HCT116 (cell line): ENCODE measurements at regions of chr1 and their contacts with region 1.

Region 1: DNA sequence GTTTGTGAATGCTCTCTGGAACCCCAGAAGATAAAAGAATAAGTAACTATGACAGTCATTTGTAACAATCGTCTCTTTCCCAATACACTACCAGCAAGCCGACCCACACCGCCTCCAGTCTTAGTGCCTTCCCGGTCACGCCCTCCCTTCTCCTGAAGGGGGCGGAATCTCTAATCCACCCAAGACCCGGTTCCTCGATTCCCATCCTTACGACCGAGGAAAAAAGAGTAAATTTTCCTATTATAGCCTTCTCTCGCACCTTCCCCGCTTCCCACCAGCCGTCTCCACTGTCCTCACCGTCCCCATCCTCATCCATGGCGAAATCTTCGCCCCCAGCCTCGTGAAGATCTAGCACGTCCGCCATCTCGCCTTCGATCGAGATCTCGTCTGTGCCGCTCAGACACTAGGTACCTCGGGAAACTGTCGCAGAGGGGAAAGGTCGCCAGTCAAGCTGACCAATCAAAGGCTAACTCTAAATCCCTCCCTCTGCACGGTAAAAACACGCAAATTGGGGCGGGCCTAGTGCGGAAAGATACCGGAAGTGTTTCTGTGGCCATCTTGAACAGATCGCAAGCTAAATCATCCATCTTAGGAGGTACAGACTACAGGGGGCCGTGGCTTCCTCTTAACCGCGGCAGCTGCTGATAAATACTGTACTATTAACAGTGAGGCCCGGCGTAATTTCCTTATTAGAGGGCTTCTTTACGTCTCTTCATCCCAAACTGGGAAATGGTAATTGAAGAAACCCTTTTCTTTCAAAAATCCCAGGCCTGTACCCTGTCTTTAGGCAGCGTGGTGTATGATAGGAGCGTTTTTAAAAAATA is at the start of gene RBM8A:
- DNase-seq: peak; percentile 98
- ATAC-seq: peak; percentile 97
- H3K4me3 ChIP-seq: peak within 1 kb of the TSS; percentile 86 to 88
- H3K27ac ChIP-seq: peak within 1 kb of the TSS; percentile 99
- H3K4me1 ChIP-seq: peaks cover 9 to 18% of the 10 kb centered on the region in 2 experiments; a peak in 3 of 4 replicates
- H3K27me3 ChIP-seq: no peaks in the 10 kb centered on the region
- CTCF ChIP-seq: peak; percentile 16 to 62 (median 59); a peak in 5 of 6 replicates
- POLR2A ChIP-seq: peak; percentile 87
- RAD21 ChIP-seq: 0 out of 2 replicates have a peak, but pooled peaks have one; percentile 3
- total RNA-seq, gene RBM8A: 195 TPM

Region 2: DNA sequence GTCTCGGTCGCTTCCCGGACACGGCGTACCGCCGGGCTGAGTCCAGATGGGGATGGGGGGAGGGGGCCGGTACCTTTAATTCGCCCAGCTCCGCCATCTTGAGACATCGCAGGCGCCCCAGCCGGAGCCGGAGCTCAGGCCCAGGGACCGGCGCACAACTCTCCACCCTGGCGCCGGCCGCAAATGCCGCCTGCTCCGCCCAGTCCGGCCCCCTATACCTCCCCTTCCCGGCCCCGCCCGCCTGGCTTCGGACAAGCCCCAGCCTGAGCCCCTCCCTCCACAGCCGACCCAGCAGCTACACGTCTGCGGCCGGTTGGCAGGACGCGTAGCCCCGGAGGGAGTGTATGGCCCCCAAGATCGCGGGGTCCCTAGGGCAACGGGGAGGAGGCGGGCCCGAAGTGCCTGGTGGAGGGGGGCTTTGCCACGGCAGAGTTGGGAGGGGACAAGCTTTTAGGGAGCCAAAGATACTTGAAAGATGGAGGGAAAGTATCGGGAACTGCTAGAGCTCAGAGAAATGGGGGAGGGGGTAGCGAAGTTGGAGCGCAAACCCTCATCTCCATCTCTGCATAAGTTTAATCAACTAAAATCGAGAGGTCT is 68.3 kb before region 1 on chr1 and contains the start of gene PIAS3:
- CTCF ChIA-PET with region 1: interaction called, 6 read pairs
- POLR2A ChIA-PET with region 1: interaction called, 12 read pairs
- RAD21 ChIA-PET with region 1: no interaction called
- intact Hi-C with region 1: no loop called
- DNase-seq: peak; percentile 82
- ATAC-seq: peak; percentile 87
- H3K4me3 ChIP-seq: peak within 1 kb of the TSS; percentile 73 to 75
- H3K27ac ChIP-seq: peak within 1 kb of the TSS; percentile 71
- H3K4me1 ChIP-seq: peaks cover 11 to 15% of the 10 kb centered on the region in 2 experiments; a peak in 3 of 4 replicates
- H3K27me3 ChIP-seq: no peaks in the 10 kb centered on the region
- CTCF ChIP-seq: no peak
- POLR2A ChIP-seq: peak; percentile 13
- RAD21 ChIP-seq: no peak
- total RNA-seq, gene PIAS3: 31.2 TPM

Region 3: GRCh38 chr1:145906954-145907753 is 20.1 kb before region 1 on chr1:
- CTCF ChIA-PET with region 1: interaction called, 3 read pairs
- POLR2A ChIA-PET with region 1: interaction called, 10 read pairs
- RAD21 ChIA-PET with region 1: no interaction called
- intact Hi-C with region 1: no loop called
- DNase-seq: no peak
- ATAC-seq: no peak
- H3K4me3 ChIP-seq: no peak overlapping the region
- H3K27ac ChIP-seq: no peak overlapping the region
- H3K4me1 ChIP-seq: peaks cover 5 to 14% of the 10 kb centered on the region in 2 experiments; a peak in 3 of 4 replicates
- H3K27me3 ChIP-seq: no peaks in the 10 kb centered on the region
- CTCF ChIP-seq: no peak
- POLR2A ChIP-seq: no peak
- RAD21 ChIP-seq: no peak

Region 4: GRCh38 chr1:145957443-145958319 is 30.4 kb after region 1 on chr1 and contains the start of gene LIX1L:
- CTCF ChIA-PET with region 1: interaction called, 5 read pairs
- POLR2A ChIA-PET with region 1: interaction called, 11 read pairs
- RAD21 ChIA-PET with region 1: interaction called in 1 of 2 experiments, 3 read pairs
- intact Hi-C with region 1: no loop called
- DNase-seq: peak; percentile 90
- ATAC-seq: peak; percentile 96
- H3K4me3 ChIP-seq: peak within 1 kb of the TSS; percentile 59 to 67
- H3K27ac ChIP-seq: peak within 1 kb of the TSS; percentile 63
- H3K4me1 ChIP-seq: peaks cover 14 to 28% of the 10 kb centered on the region in 2 experiments
- H3K27me3 ChIP-seq: no peaks in the 10 kb centered on the region
- CTCF ChIP-seq: no peak
- POLR2A ChIP-seq: peak; percentile 58
- RAD21 ChIP-seq: no peak
- total RNA-seq, gene LIX1L: 12.4 TPM

Region 5: GRCh38 chr1:145963995-145964901 is 37.0 kb after region 1 on chr1 and contains the starts of genes ANKRD34A and POLR3GL:
- CTCF ChIA-PET with region 1: interaction called, 11 read pairs
- POLR2A ChIA-PET with region 1: interaction called, 22 read pairs
- RAD21 ChIA-PET with region 1: no interaction called
- intact Hi-C with region 1: no loop called
- DNase-seq: peak; percentile 92
- ATAC-seq: peak; percentile 97
- H3K4me3 ChIP-seq: peak within 1 kb of the TSS; percentile 70 to 73
- H3K27ac ChIP-seq: peak within 1 kb of the TSS; percentile 64
- H3K4me1 ChIP-seq: peaks cover 19 to 27% of the 10 kb centered on the region in 2 experiments
- H3K27me3 ChIP-seq: no peaks in the 10 kb centered on the region
- CTCF ChIP-seq: no peak
- POLR2A ChIP-seq: peak; percentile 85
- RAD21 ChIP-seq: no peak
- total RNA-seq, gene ANKRD34A: 1.1 TPM
- total RNA-seq, gene POLR3GL: 17.9 TPM